CD8-positive, alpha-beta memory T cell (primary cell): ENCODE measurements at regions of chr4 and their contacts with region 1.

Region 1: DNA sequence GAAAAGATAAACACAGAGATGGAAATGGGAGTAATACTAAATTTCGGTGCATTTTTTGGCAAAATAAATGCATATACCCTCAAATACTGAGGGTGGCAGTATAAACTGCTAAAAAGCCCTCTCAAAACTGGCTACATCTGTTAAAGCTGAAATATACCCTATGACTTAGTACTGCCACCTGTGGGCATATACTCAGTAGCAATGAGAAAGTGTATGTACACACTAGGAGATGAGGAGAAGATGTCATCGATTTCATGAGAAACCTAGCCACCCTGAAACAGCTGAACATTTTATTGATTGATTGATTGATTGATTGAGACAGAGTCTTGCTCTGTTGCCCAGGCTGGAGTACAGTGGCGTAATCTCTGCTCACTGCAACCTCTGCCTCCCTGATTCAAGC is 12.2 kb upstream of the TMEM128 start:
- DNase-seq: peak in 2 of 5 donors; percentile 53 to 71
- H3K4me3 ChIP-seq: no peak overlapping the region
- H3K4me3 Mint-ChIP-seq: peak overlapping the region in 1 of 7 donors; percentile 1
- H3K27ac ChIP-seq: no peak overlapping the region
- H3K27ac Mint-ChIP-seq: peak overlapping the region in 7 of 8 donors; percentile 29 to 82 (median 69)
- H3K4me1 ChIP-seq: peaks cover 7% of the 10 kb centered on the region
- H3K4me1 Mint-ChIP-seq: peaks cover 20 to 35% (median 35%) of the 10 kb centered on the region in 3 donors
- H3K27me3 ChIP-seq: no peaks in the 10 kb centered on the region
- H3K27me3 Mint-ChIP-seq: no peaks in the 10 kb centered on the region

Region 2: DNA sequence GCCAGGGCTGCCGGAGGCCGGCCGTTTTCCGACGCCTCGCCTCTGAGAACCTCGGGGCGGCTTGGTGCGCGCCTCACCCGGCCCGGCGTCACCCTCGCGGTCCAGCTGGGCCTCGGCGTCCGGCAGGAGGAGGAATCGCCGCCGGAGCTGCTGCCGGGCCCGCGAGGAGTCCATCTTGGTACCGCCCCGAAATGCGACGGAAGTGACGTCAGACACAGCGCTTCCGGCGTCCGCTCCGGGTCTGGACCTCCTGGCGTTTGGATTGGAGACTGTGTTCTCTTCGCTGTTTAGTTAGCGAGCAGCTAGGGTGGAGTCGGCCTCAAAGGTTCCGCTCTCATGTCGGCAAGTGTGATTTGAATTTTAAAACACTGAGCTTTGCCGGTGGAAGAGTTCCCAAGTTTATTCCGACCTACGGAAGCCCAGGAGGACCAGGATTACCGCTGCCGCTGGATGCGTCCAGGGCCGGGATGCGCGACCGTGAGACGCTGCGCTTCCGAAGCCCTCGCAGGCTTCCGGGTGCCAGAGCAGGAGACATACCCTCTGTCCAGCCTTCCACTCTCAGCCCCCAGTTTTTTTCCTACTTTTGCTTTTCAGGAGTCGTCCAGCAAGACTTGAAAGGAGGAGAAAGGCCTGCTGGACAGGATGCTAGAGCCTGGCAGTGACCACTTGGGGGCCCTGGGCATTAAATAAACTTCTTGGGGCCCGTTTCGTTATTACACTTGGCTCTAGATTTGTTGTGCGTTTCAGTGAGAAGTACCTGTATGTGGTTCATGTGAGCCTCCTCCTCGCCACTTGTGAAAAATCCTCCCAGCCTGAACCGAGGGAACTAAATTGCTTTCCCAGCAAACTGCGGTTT is 12.0 kb before region 1 on chr4 and contains the start of gene TMEM128:
- CTCF ChIA-PET with region 1: interaction called, 23 read pairs
- POLR2A ChIA-PET with region 1: interaction called, 6 read pairs
- DNase-seq: peak; percentile 88 to 95 (median 89)
- H3K4me3 ChIP-seq: peak within 1 kb of the TSS; percentile 74
- H3K4me3 Mint-ChIP-seq: peak within 1 kb of the TSS; percentile 95 to 99 (median 97)
- H3K27ac ChIP-seq: peak within 1 kb of the TSS; percentile 93
- H3K27ac Mint-ChIP-seq: peak within 1 kb of the TSS; percentile 97 to 99 (median 98)
- H3K4me1 ChIP-seq: peaks cover 16% of the 10 kb centered on the region
- H3K4me1 Mint-ChIP-seq: peaks cover 27 to 48% (median 44%) of the 10 kb centered on the region in 3 donors
- H3K27me3 ChIP-seq: no peaks in the 10 kb centered on the region
- H3K27me3 Mint-ChIP-seq: no peaks in the 10 kb centered on the region
- total RNA-seq, gene TMEM128: 24.1 to 26.6 TPM

Region 3: DNA sequence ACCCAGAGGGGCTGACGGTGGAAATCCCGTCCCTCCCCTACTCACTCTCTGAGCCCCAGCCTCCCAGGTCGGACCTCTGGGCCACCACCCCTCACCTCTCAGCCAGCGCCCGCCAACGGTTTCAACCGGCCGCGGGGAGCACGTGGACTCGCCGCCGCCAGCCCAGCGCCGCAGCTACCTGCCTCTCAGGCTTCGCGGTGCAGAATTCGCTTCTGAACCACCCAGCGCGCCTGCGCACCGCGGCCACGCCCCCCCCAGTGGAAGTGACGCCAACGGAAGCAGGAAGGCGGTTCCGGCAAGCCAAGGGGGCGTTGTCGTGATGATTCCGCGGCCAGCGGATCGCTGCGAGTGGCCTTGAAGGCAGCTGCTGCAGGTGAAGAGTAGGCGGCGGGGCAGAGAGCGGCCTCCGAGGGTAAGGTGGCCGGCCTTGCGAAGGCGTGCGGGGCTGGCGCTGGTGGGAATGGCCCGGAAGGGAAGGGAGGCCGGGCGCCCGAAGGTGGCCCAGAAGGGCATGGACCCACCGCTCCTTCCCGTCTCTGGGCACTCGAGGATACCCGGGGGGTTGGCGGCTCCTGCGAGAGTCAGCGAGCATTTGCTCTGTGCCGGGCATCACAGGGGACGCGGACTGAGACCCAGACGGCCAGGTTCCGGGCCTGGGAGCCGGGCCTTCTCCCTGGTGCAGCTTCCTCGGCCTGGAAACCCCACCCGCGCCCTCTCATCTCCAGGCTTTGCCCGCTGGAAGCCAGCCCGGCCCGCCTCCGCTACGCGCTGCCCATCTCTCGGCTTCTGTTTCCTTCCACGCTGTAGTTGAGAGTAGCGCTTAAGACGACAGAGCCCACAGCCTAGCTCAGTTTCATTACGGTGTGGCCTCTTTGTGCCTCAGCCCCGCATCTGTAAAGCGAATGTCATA is 29.9 kb after region 1 on chr4 and contains the starts of genes LYAR and ZBTB49:
- CTCF ChIA-PET with region 1: interaction called, 25 read pairs
- POLR2A ChIA-PET with region 1: interaction called, 10 read pairs
- DNase-seq: peak; percentile 96 to 98 (median 97)
- H3K4me3 ChIP-seq: peak within 1 kb of the TSS; percentile 97
- H3K4me3 Mint-ChIP-seq: peak within 1 kb of the TSS; percentile 93 to 99 (median 96)
- H3K27ac ChIP-seq: peak within 1 kb of the TSS; percentile 85
- H3K27ac Mint-ChIP-seq: peak within 1 kb of the TSS; percentile 90 to 98 (median 96)
- H3K4me1 ChIP-seq: peaks cover 35% of the 10 kb centered on the region
- H3K4me1 Mint-ChIP-seq: peaks cover 66 to 85% (median 75%) of the 10 kb centered on the region in 3 donors
- H3K27me3 ChIP-seq: no peaks in the 10 kb centered on the region
- H3K27me3 Mint-ChIP-seq: no peaks in the 10 kb centered on the region
- total RNA-seq, gene LYAR: 95.8 to 103 TPM
- total RNA-seq, gene ZBTB49: 7.9 to 8.7 TPM

Region 4: DNA sequence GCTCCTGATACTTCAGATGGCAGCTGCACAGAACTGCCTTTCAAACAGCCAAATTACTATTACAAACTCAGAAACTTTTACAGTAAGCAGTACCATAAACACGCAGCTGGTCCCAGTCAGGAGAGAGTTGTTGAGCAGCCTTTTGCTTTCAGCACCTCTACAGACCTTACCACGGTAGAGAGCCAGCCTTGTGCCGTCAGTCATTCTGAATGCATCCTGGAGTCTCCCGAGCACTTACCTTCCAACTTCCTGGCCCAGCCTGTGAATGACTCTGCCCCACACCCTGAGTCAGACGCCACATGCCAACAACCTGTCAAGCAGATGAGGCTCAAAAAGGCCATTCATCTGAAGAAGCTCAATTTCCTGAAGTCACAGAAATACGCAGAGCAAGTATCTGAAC is 42.2 kb after region 1 on chr4:
- CTCF ChIA-PET with region 1: interaction called, 16 read pairs
- POLR2A ChIA-PET with region 1: no interaction called
- DNase-seq: no peak
- H3K4me3 ChIP-seq: no peak overlapping the region
- H3K4me3 Mint-ChIP-seq: no peak overlapping the region
- H3K27ac ChIP-seq: no peak overlapping the region
- H3K27ac Mint-ChIP-seq: peak overlapping the region in 4 of 8 donors; percentile 48 to 69 (median 64)
- H3K4me1 ChIP-seq: no peaks in the 10 kb centered on the region
- H3K4me1 Mint-ChIP-seq: peaks cover 16 to 63% (median 41%) of the 10 kb centered on the region in 3 donors
- H3K27me3 ChIP-seq: no peaks in the 10 kb centered on the region
- H3K27me3 Mint-ChIP-seq: no peaks in the 10 kb centered on the region

Region 5: GRCh38 chr4:4344915-4345527 is 84.8 kb after region 1 on chr4:
- CTCF ChIA-PET with region 1: interaction called, 97 read pairs
- POLR2A ChIA-PET with region 1: no interaction called
- DNase-seq: no peak
- H3K4me3 ChIP-seq: no peak overlapping the region
- H3K4me3 Mint-ChIP-seq: no peak overlapping the region
- H3K27ac ChIP-seq: no peak overlapping the region
- H3K27ac Mint-ChIP-seq: peak overlapping the region in 1 of 8 donors; percentile 37
- H3K4me1 ChIP-seq: peaks cover 22% of the 10 kb centered on the region
- H3K4me1 Mint-ChIP-seq: peaks cover 23 to 52% (median 38%) of the 10 kb centered on the region in 3 donors
- H3K27me3 ChIP-seq: no peaks in the 10 kb centered on the region
- H3K27me3 Mint-ChIP-seq: peaks cover 0 to 7% of the 10 kb centered on the region in 2 donors